Activated naive CD4-positive, alpha-beta T cell treated with anti-CD3 and anti-CD28 coated beads for 36 hours (primary cell): ENCODE measurements at regions of chr11 and their contacts with region 1.

Region 1: DNA sequence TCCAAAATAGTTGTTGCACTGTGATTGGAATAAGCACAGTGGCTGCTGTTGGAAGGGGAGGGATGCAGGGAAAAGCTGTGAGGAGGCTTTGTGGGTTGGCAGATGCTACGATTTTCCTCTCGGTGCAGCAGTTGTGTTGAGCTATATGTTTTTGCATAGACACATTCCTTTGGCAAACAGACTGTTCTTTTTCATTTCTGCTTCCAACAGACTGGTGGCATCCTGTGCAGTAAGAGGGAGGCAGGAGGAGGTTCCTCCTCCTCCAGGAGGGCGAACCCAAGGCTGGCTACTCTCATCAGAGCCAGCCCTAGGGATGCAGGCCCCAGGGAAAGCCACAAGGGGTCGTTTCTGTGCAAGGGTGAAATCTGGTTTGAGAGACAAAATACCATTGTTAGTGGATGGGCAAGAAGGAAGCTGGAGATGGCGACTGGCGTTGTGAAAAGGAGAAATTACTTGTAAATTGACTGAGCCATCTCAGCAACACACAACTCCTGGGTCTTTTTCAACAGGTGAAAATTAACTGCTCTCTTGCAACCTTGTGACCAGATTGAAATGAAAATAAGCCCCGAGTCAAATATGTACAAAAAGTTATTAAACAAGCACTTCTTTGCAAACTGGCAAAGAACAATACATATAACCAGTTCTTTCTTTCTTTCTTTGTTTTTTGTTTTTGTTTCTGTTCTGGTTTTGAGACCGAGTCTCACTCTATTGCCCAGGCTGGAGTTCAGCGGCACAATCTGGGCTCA is 26.5 kb upstream of the UBASH3B start:
- DNase-seq: peak; percentile 79
- H3K4me3 Mint-ChIP-seq: no peak overlapping the region
- H3K27ac Mint-ChIP-seq: no peak overlapping the region
- H3K4me1 Mint-ChIP-seq: peaks cover 13% of the 10 kb centered on the region
- H3K27me3 Mint-ChIP-seq: no peaks in the 10 kb centered on the region

Region 2: DNA sequence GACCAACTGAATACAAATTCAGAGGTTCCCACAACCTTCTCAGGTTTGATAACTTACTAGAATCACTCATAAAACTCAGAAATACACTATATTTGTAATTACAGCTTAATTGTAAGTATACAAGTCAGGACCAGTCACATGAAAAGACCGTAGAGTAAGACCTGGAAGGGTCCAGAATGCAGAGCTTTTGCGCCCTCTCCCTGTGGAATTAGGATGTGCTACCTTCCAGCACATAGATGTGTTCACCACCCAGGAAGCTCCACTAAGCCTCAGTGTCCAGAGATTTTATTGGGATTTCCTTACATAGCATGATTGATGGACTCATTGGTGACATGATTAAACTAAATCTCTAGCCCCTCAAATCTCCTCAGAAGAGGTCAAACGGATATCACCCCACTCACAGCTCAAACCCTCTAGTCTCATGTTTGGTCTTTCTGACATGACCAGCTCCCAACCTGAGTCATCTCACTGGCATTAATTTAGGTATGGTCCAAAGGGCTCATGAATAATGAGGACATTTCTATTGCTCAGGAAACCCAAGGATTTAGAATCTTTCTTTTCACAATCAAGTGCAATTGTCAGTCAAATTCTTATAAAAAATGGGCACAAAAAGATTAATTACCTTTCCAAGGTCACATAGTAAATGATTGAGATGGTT is 50.7 kb before region 1 on chr11:
- CTCF ChIA-PET with region 1: interaction called, 11 read pairs
- intact Hi-C with region 1: loop called (anchors 1 kb)
- DNase-seq: peak; percentile 17
- H3K4me3 Mint-ChIP-seq: no peak overlapping the region
- H3K27ac Mint-ChIP-seq: no peak overlapping the region
- H3K4me1 Mint-ChIP-seq: peaks cover 7% of the 10 kb centered on the region
- H3K27me3 Mint-ChIP-seq: no peaks in the 10 kb centered on the region

Region 3: DNA sequence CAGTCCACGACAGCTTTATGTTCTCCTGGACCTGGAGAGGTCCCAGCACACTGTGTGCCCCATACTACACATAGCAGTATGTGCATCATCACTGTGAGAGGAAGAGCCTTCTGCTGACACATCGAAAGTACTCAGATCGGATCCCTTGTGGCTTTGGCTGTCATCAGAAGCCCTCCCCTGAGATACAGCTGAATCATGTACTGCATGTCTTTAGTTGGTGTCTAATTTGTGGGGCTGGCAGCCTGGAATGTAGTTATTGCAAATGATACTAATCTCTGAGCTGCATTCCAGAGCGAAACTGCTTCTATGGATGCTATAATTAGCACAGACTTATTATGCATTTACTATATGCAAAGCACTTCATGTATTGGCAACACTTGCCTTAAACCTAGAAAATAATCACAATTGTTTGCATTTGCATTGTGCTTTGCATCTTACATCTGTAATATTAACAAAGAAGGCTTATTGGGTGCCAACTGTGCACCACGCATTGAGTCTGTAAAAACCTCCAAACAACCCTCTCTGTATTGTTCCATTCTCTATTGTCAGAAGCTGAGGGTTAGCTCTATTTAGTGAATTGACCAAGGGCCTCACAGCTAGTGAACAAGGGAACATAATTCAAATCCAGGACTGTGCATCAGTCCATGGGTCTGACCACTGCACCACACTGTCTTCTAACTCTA is 120.2 kb after region 1 on chr11:
- CTCF ChIA-PET with region 1: interaction called, 49 read pairs
- intact Hi-C with region 1: loop called (anchors 1 kb)
- DNase-seq: peak; percentile 83
- H3K4me3 Mint-ChIP-seq: no peak overlapping the region
- H3K27ac Mint-ChIP-seq: no peak overlapping the region
- H3K4me1 Mint-ChIP-seq: peaks cover 17% of the 10 kb centered on the region
- H3K27me3 Mint-ChIP-seq: peaks cover 3% of the 10 kb centered on the region